Activated B cell treated with CpG ODN at 0.5 μM for 24 hours (primary cell): ENCODE measurements at regions of chr6 and their contacts with region 1.

Region 1: GRCh38 chr6:286681-287488 is 5.4 kb upstream of the DUSP22 start:
- DNase-seq: peak; percentile 54
- ATAC-seq: peak; percentile 47
- H3K4me3 Mint-ChIP-seq: peak overlapping the region; percentile 76
- H3K27ac Mint-ChIP-seq: peak overlapping the region; percentile 93
- H3K4me1 Mint-ChIP-seq: peaks cover 65% of the 10 kb centered on the region
- H3K27me3 Mint-ChIP-seq: no peaks in the 10 kb centered on the region
- CTCF ChIP-seq: no peak

Region 2: GRCh38 chr6:217048-217659 is 69.7 kb before region 1 on chr6:
- CTCF ChIA-PET with region 1: interaction called, 7 read pairs
- POLR2A ChIA-PET with region 1: interaction called, 82 read pairs
- intact Hi-C with region 1: loop called (anchors 1 kb)
- DNase-seq: no peak
- ATAC-seq: no peak
- H3K4me3 Mint-ChIP-seq: peak overlapping the region; percentile 61
- H3K27ac Mint-ChIP-seq: peak overlapping the region; percentile 90
- H3K4me1 Mint-ChIP-seq: peaks cover 81% of the 10 kb centered on the region
- H3K27me3 Mint-ChIP-seq: no peaks in the 10 kb centered on the region
- CTCF ChIP-seq: no peak

Region 3: GRCh38 chr6:259901-260508 is 26.9 kb before region 1 on chr6:
- CTCF ChIA-PET with region 1: no interaction called
- POLR2A ChIA-PET with region 1: interaction called, 12 read pairs
- intact Hi-C with region 1: loop called (anchors 5 kb)
- DNase-seq: no peak
- ATAC-seq: peak; percentile 34
- H3K4me3 Mint-ChIP-seq: peak overlapping the region; percentile 11
- H3K27ac Mint-ChIP-seq: peak overlapping the region; percentile 19
- H3K4me1 Mint-ChIP-seq: peaks cover 80% of the 10 kb centered on the region
- H3K27me3 Mint-ChIP-seq: no peaks in the 10 kb centered on the region
- CTCF ChIP-seq: no peak

Region 4: GRCh38 chr6:273551-274058 is 13.3 kb before region 1 on chr6:
- CTCF ChIA-PET with region 1: no interaction called
- POLR2A ChIA-PET with region 1: interaction called, 9 read pairs
- intact Hi-C with region 1: loop called (anchors 1 kb)
- DNase-seq: no peak
- ATAC-seq: no peak
- H3K4me3 Mint-ChIP-seq: no peak overlapping the region
- H3K27ac Mint-ChIP-seq: no peak overlapping the region
- H3K4me1 Mint-ChIP-seq: peaks cover 40% of the 10 kb centered on the region
- H3K27me3 Mint-ChIP-seq: no peaks in the 10 kb centered on the region
- CTCF ChIP-seq: no peak

Region 5: GRCh38 chr6:328136-328670 is 41.3 kb after region 1 on chr6:
- CTCF ChIA-PET with region 1: no interaction called
- POLR2A ChIA-PET with region 1: interaction called, 10 read pairs
- intact Hi-C with region 1: loop called (anchors 1 kb)
- DNase-seq: peak; percentile 20
- ATAC-seq: peak; percentile 90
- H3K4me3 Mint-ChIP-seq: no peak overlapping the region
- H3K27ac Mint-ChIP-seq: no peak overlapping the region
- H3K4me1 Mint-ChIP-seq: peaks cover 8% of the 10 kb centered on the region
- H3K27me3 Mint-ChIP-seq: no peaks in the 10 kb centered on the region
- CTCF ChIP-seq: no peak